ENCODE measurements at regions of chr14 and their contacts with region 1.

Region 1: GRCh38 chr14:22848351-22849164 is 12.2 kb downstream of the MMP14 start:
- DNase-seq: peak; percentile 44 to 94
- H3K4me3 ChIP-seq: peak overlapping the region in 1 of 4 donors; percentile 13
- H3K27ac ChIP-seq: peak overlapping the region; percentile 73 to 90 (median 88)
- H3K4me1 ChIP-seq: peaks cover 65 to 91% (median 72%) of the 10 kb centered on the region in 4 donors
- H3K27me3 ChIP-seq: no peaks in the 10 kb centered on the region
- CTCF ChIP-seq: no peak
- EP300 ChIP-seq: no peak
- POLR2A ChIP-seq: no peak

Region 2: GRCh38 chr14:22556990-22557623 is 291.5 kb before region 1 on chr14:
- intact Hi-C with region 1: loop called (anchors 10 kb)
- DNase-seq: peak; percentile 85 to 95
- H3K4me3 ChIP-seq: peak overlapping the region; percentile 26 to 36 (median 32)
- H3K27ac ChIP-seq: peak overlapping the region; percentile 78 to 91 (median 85)
- H3K4me1 ChIP-seq: peaks cover 53 to 66% (median 58%) of the 10 kb centered on the region in 4 donors
- H3K27me3 ChIP-seq: no peaks in the 10 kb centered on the region
- CTCF ChIP-seq: peak in 6 of 7 experiments; percentile 67 to 100 (median 98)
- EP300 ChIP-seq: no peak
- POLR2A ChIP-seq: no peak